GM13977 (cell line): ENCODE measurements at regions of chr13 and their contacts with region 1.

Region 1: GRCh38 chr13:20182231-20182846 is 10.4 kb downstream of the GJB2 start:
- DNase-seq: peak; percentile 86
- CTCF ChIP-seq: peak; percentile 83

Region 2: DNA sequence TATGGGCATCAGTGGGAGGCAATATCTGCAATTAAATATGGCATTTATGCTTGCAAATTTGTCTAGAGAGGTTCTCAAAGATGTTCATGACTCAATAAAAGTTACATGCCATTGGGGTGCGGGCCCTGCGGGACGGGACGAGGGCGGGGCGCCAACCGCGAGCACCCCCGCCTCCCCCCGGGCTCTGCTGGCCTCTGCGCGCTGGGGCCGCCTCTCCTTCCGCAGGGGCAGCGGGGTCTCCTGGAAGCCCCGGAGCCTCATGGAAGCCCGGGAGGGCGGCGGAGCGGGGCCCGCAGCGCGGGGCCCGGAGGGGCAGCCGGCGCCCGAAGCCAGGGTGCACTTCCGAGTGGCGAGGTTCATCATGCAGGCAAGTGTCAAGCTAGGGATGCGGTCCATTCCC is 800.2 kb before region 1 on chr13:
- in situ Hi-C with region 1: no loop called
- DNase-seq: peak; percentile 6
- CTCF ChIP-seq: no peak

Region 3: DNA sequence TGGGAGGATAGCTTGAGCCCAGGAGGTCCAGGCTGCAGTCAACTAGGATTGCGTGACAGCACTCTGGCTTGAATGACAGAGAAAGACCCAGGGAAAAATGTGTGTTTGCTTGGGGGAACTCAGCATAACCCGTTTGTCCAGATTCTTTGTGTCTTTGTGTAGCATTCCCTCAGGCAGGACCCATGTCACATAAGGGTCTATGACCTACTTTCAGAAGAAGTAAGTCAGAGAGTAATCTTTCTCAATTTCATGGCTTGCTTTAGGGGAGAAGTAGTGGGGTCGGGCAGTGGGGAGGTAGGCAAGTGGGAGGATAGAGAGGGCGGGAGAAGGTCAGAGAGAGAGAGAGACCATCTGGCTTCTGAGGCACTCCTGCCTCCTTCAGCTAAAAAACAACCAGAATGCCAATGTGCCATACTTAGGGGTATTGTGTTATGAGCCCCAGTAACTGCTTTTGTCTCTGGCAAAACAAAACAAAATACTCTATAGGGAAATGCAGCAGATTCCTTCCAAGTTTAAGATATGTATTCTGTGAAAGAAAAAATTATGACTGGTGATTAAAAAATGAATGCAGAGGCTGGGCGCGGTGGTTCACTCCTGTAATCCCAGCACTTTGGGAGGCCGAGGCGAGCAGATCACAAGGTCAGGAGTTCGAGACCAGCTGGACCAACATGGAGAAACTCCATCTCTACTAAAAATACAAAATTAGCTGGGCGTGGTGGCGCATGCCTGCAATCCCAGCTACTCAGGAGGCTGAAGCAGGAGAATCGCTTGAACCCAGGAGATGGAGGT is 387.5 kb before region 1 on chr13:
- in situ Hi-C with region 1: no loop called
- DNase-seq: no peak
- CTCF ChIP-seq: no peak

Region 4: DNA sequence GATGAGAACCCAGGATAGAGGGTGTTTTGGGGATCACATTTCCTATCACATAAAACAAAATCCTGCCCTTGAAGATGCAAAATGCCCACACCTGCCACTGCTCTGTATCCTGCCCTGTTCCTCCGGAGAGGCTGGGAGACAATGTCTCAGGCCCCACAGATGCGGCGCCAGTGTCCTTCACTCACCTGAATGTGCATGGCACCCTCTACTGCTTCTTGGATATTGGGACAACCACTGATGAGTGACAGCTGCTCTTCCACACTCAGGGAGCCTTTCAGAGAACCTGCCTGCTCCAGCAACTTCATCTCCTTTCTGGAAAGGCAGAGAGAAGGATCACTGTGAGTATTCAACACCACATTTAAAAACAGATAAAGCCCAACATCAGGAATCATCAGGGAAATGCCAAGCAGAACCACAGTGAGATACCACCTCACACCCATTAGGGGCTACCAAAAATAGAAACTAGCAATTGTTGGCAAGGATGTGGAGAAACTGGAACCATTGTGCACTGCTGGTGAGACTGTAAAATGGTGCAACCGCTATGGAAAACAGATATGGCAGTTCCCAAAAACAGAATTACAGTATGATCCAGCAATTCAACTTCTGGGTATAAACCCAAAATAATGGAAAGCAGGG is 307.0 kb after region 1 on chr13:
- in situ Hi-C with region 1: loop called (anchors 10 kb)
- DNase-seq: peak; percentile 57
- CTCF ChIP-seq: peak; percentile 70

Region 5: GRCh38 chr13:20828539-20829364 is 646.4 kb after region 1 on chr13:
- in situ Hi-C with region 1: loop called (anchors 25 kb)
- DNase-seq: peak; percentile 41
- CTCF ChIP-seq: peak; percentile 65

Region 6: DNA sequence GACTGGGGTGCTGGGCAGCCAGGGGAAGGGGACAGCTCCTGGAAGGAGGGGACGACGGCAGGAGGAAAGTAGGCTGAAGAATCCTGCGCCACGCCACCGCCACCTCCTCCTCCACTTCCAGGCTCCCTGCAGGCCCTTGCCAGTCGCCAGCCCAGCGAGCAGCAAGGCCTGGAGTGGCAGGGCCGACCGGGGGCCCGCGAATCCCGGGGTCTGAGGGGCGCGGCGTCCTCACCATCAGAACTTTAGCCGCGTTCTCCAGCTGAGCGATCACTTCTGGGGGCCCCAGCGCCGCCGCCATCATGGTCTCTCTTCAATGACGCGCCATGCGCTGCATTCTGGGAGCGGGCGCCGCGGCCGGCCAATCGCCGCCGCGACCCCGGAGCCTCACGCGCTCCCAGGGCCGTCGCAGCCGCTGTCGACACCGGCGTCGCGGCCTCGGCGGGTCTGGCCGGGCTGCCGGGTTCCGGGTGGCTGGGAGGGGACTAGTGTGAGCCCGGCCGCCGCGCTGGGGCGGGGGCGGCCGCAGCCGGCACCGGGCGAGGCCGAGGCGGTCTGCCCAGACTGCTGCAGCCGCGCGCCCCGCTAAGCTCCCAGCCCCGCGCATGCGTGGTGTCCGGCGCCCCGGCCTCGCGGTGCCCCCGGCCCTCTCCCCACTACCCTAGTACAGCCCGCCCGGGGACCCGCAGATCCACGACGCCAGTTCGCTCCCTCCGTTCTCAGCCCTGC is 720.3 kb after region 1 on chr13 and contains the start of gene XPO4:
- in situ Hi-C with region 1: loop called (anchors 25 kb)
- DNase-seq: peak; percentile 95
- CTCF ChIP-seq: no peak